ENCODE measurements at regions of chr12 and their contacts with region 1.

Region 1: DNA sequence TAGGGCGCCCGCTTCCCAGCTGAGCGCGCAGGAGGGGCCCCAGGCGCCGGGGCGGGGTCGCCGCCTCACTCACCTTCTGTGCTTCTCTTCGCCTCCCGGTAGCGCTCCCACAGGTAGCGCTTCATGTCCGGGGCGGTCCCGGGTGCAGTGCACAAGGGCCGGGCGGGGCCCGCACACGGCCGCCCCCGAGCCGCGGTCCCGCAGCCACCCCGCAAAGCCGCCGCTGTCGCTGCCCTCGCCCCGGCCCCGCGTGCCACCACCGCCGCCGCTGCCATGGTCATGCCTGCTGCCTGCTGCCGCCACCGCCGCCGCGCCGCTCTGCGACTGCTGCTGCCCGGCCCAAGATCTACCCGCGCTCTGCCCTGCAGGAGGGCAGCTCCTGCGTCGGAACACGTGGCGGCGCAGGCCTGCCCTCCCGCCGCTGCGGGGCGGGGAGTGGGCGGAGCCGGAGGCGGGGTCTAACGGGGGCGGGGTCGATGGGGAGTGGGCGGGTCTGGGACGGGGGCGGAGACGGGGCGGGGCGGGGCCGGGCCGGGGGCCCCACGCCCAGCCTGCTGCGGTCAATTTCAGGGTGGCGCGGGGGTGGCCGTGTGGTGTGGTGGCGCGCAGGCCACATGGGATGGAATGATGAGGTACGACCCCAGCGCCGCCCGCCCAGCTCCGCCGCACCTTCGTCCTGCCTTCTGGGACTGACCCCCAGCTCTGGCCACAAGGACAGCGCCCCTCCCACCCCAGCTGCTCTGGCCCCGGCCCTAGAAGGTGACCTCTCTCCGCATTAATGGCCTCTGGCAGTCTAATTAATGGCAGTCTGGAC is at the start of gene NT5DC3:
- DNase-seq: peak; percentile 66 to 91 (median 82)
- ATAC-seq: peak; percentile 93
- H3K4me3 ChIP-seq: peak within 1 kb of the TSS; percentile 64 to 68
- H3K4me3 Mint-ChIP-seq: peak within 1 kb of the TSS; percentile 85
- H3K27ac ChIP-seq: peak within 1 kb of the TSS; percentile 36 to 40
- H3K27ac Mint-ChIP-seq: peak within 1 kb of the TSS; percentile 74
- H3K4me1 ChIP-seq: peaks cover 11% of the 10 kb centered on the region
- H3K4me1 Mint-ChIP-seq: peaks cover 18% of the 10 kb centered on the region
- H3K27me3 ChIP-seq: no peaks in the 10 kb centered on the region
- H3K27me3 Mint-ChIP-seq: no peaks in the 10 kb centered on the region
- CTCF ChIP-seq: no peak
- total RNA-seq, gene NT5DC3: 4.3 to 5.6 TPM

Region 2: DNA sequence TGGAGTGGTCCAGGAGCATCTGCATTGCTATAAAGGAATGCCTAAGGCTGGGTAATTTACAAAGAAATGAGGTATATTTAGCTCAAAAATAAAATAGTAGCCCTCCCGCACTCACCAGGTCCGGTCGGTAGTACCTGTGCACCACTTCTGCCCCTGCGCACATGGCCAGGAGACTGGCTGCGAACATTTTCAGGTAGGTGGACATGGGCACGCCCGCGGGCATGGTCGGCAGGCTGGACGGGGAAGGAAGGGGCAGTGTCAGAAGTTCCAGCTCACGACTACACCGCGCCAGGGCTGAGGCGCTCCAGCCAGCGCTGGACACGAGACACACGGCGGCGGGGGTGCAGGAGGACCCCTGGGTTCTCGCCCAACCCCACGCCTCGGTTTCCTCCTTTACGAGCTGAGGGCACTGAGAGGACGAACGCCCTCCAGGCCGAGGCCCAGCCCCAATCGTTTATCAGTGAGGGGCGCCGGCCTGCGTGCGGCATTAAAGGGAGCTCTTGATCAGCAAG is 115.5 kb after region 1 on chr12:
- CTCF ChIA-PET with region 1: no interaction called
- POLR2A ChIA-PET with region 1: interaction called, 3 read pairs
- intact Hi-C with region 1: loop called in 1 of 2 experiments (anchors 2 kb)
- DNase-seq: peak in 2 of 9 experiments; percentile 1 to 9
- ATAC-seq: no peak
- H3K4me3 ChIP-seq: peak overlapping the region; percentile 65 to 86
- H3K4me3 Mint-ChIP-seq: peak overlapping the region; percentile 99
- H3K27ac ChIP-seq: peak overlapping the region; percentile 78 to 79
- H3K27ac Mint-ChIP-seq: peak overlapping the region; percentile 99
- H3K4me1 ChIP-seq: peaks cover 22% of the 10 kb centered on the region
- H3K4me1 Mint-ChIP-seq: peaks cover 31% of the 10 kb centered on the region
- H3K27me3 ChIP-seq: no peaks in the 10 kb centered on the region
- H3K27me3 Mint-ChIP-seq: no peaks in the 10 kb centered on the region
- CTCF ChIP-seq: no peak

Region 3: GRCh38 chr12:104137913-104138796 is 297.1 kb after region 1 on chr12 and contains the start of gene NFYB:
- CTCF ChIA-PET with region 1: no interaction called
- POLR2A ChIA-PET with region 1: interaction called, 11 read pairs
- intact Hi-C with region 1: loop called in 1 of 2 experiments (anchors 1 kb)
- DNase-seq: peak; percentile 82 to 98 (median 90)
- ATAC-seq: peak; percentile 95
- H3K4me3 ChIP-seq: peak within 1 kb of the TSS; percentile 63 to 71
- H3K4me3 Mint-ChIP-seq: peak within 1 kb of the TSS; percentile 92
- H3K27ac ChIP-seq: peak within 1 kb of the TSS; percentile 57 to 58
- H3K27ac Mint-ChIP-seq: peak within 1 kb of the TSS; percentile 87
- H3K4me1 ChIP-seq: peaks cover 31% of the 10 kb centered on the region
- H3K4me1 Mint-ChIP-seq: peaks cover 16% of the 10 kb centered on the region
- H3K27me3 ChIP-seq: no peaks in the 10 kb centered on the region
- H3K27me3 Mint-ChIP-seq: no peaks in the 10 kb centered on the region
- CTCF ChIP-seq: no peak
- total RNA-seq, gene NFYB: 9.1 to 11.2 TPM

Region 4: GRCh38 chr12:104986022-104986941 is 1145.2 kb after region 1 on chr12 and contains the start of gene NOPCHAP1:
- CTCF ChIA-PET with region 1: no interaction called
- POLR2A ChIA-PET with region 1: no interaction called
- intact Hi-C with region 1: loop called in 1 of 2 experiments (anchors 10 kb)
- DNase-seq: peak; percentile 66 to 89 (median 82)
- ATAC-seq: peak; percentile 98
- H3K4me3 ChIP-seq: peak within 1 kb of the TSS; percentile 70 to 93
- H3K4me3 Mint-ChIP-seq: peak within 1 kb of the TSS; percentile 90
- H3K27ac ChIP-seq: peak within 1 kb of the TSS; percentile 33 to 55
- H3K27ac Mint-ChIP-seq: peak within 1 kb of the TSS; percentile 80
- H3K4me1 ChIP-seq: peaks cover 16% of the 10 kb centered on the region
- H3K4me1 Mint-ChIP-seq: peaks cover 35% of the 10 kb centered on the region
- H3K27me3 ChIP-seq: no peaks in the 10 kb centered on the region
- H3K27me3 Mint-ChIP-seq: no peaks in the 10 kb centered on the region
- CTCF ChIP-seq: no peak
- total RNA-seq, gene NOPCHAP1: 13.2 to 16.5 TPM

Region 5: DNA sequence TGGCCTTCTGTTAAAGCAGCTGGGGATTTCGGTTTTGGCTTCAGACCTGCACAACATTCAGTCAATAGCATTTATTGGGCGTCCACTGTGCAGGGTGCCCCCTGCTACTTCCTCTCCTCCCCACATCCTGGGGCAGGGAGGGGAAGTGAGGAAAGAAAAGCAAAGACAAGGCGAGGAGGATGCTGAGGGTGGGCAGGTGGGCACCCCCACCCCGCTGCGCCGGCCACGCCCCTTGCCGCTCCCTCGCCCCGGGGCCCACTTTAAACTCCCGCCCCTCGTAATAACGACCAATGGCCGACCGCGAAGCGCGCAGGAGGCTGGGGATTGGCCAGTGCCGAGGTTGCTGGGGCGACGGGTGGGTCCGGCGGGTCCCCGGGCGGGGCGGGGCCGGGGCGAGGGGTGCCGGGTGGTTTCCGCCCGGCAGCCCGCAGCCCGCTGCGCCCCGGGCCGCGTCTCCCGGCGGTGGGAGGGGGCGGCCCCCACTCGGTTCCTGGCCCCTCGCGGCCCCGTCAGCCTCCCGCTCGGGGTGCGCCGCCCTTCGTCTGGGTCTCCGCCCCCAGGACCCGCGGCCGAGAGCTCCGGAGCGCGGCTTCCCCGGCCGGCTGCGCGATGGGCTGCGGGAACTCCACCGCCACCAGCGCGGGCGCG is 1489.3 kb after region 1 on chr12 and contains the start of gene C12orf75:
- CTCF ChIA-PET with region 1: no interaction called
- POLR2A ChIA-PET with region 1: no interaction called
- intact Hi-C with region 1: loop called in 1 of 2 experiments (anchors 5 kb)
- DNase-seq: peak; percentile 52 to 93 (median 85)
- ATAC-seq: peak; percentile 80
- H3K4me3 ChIP-seq: peak within 1 kb of the TSS; percentile 62 to 70
- H3K4me3 Mint-ChIP-seq: peak within 1 kb of the TSS; percentile 90
- H3K27ac ChIP-seq: peak within 1 kb of the TSS; percentile 48 to 74
- H3K27ac Mint-ChIP-seq: peak within 1 kb of the TSS; percentile 87
- H3K4me1 ChIP-seq: peaks cover 26% of the 10 kb centered on the region
- H3K4me1 Mint-ChIP-seq: peaks cover 60% of the 10 kb centered on the region
- H3K27me3 ChIP-seq: no peaks in the 10 kb centered on the region
- H3K27me3 Mint-ChIP-seq: no peaks in the 10 kb centered on the region
- CTCF ChIP-seq: no peak
- total RNA-seq, gene C12orf75: 27.5 to 27.9 TPM